ENCODE measurements at regions of chr3 and their contacts with region 1.

Region 1: DNA sequence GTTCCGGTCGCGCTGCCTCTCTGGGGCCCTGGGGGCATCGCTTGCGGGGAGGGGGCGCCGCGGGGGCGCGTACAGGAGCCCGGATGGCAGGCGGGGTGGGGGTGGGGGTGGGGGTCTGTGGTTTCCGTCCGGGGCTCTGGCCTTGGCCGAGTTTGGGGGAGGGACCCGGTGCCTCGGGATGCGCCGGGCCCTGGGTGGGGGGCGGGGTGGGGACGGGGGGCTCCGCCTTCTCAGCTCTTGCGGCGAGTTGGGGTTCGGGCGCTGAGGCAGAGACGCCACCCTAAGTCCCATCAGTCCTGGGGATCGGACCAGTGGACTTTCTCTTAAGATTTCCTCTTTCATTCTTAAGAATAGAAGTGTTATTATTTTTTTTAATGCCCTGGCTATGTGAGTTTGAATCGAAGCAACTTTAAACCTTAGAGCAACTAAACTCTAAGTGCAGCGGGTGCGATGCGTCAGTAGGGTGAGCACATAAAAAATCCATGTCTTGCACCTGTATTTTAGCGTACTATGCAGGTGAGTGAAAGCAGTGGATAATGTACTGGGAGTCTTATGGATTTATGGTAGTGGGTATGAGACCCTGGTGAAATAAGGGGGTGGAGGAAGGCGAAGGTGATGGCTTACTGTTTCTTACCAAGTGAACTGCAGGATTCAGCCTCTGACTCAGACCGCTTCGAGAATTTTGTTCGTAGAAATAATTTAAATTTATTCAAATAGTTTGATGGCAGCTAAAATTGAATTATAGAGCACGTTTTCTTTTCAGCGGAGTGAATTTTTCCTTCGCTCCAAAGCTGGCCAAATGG is 762 bp downstream of the CTNNB1 start:
- DNase-seq: peak; percentile 23
- H3K4me3 Mint-ChIP-seq: peak overlapping the region; percentile 88
- H3K27ac Mint-ChIP-seq: peak overlapping the region; percentile 85
- H3K4me1 Mint-ChIP-seq: peaks cover 21% of the 10 kb centered on the region
- H3K27me3 Mint-ChIP-seq: no peaks in the 10 kb centered on the region
- CTCF ChIP-seq: no peak

Region 2: GRCh38 chr3:40719660-40720287 is 480.3 kb before region 1 on chr3:
- CTCF ChIA-PET with region 1: interaction called, 3 read pairs
- intact Hi-C with region 1: loop called (anchors 5 kb)
- DNase-seq: peak; percentile 17
- H3K4me3 Mint-ChIP-seq: no peak overlapping the region
- H3K27ac Mint-ChIP-seq: no peak overlapping the region
- H3K4me1 Mint-ChIP-seq: no peaks in the 10 kb centered on the region
- H3K27me3 Mint-ChIP-seq: peaks cover 3% of the 10 kb centered on the region
- CTCF ChIP-seq: no peak

Region 3: DNA sequence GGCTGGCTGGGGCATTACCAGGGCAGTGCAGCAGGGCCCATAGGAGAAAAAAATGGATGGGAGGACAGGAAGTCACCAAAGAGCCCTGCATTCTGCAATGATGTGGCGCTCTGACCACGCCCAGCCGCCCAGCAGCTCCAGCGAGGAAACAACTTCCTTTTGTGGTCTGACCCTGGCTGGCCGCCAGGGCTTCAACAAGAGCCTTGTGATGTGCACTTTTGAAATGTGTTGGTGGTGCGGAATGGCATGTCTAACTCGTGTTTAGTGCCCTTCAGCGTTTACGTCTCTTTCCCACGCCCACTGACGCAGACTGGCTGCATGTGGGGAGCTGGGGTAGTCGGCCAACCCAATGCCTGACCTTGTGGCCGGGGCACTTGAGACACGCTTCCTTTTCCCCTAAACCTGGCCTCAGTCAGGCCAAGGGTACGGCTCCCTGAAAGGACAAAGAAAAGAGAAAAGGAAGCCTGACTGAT is 82.6 kb before region 1 on chr3:
- CTCF ChIA-PET with region 1: no interaction called
- intact Hi-C with region 1: loop called (anchors 5 kb)
- DNase-seq: peak; percentile 91
- H3K4me3 Mint-ChIP-seq: no peak overlapping the region
- H3K27ac Mint-ChIP-seq: peak overlapping the region; percentile 44
- H3K4me1 Mint-ChIP-seq: peaks cover 26% of the 10 kb centered on the region
- H3K27me3 Mint-ChIP-seq: peaks cover 23% of the 10 kb centered on the region
- CTCF ChIP-seq: no peak

Region 4: DNA sequence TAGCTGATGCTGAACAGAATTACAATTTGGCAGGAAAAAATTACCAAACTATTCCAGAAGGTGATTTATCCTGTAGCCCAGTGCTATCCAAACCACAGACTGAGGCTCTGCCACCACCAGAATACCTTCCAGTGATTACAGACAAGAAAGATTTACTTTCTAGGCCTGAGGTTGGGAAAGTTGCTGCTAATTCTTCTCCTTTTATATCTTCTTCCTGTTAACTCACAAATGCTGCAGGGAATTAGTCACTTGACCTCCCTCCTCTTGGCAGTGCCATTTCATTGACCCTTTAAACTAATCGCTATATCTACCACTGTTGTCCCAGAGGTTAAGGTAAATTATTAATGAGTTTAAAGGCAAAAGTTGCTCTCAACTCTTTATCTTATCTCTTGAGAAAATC is 117.7 kb after region 1 on chr3:
- CTCF ChIA-PET with region 1: no interaction called
- intact Hi-C with region 1: loop called (anchors 5 kb)
- DNase-seq: peak; percentile 12
- H3K4me3 Mint-ChIP-seq: peak overlapping the region; percentile 15
- H3K27ac Mint-ChIP-seq: no peak overlapping the region
- H3K4me1 Mint-ChIP-seq: peaks cover 15% of the 10 kb centered on the region
- H3K27me3 Mint-ChIP-seq: peaks cover 12% of the 10 kb centered on the region
- CTCF ChIP-seq: no peak